ENCODE measurements at regions of chr12 and their contacts with region 1.

Region 1: GRCh38 chr12:125183187-125184067 is 118.2 kb downstream of the AACS start:
- DNase-seq: peak; percentile 31 to 86 (median 72)
- ATAC-seq: peak; percentile 85
- H3K4me3 ChIP-seq: no peak overlapping the region
- H3K4me3 Mint-ChIP-seq: peak overlapping the region in 6 of 10 donors; percentile 17 to 47 (median 34)
- H3K27ac ChIP-seq: no peak overlapping the region
- H3K27ac Mint-ChIP-seq: no peak overlapping the region
- H3K4me1 ChIP-seq: no peaks in the 10 kb centered on the region
- H3K4me1 Mint-ChIP-seq: peaks cover 5 to 11% (median 7%) of the 10 kb centered on the region in 7 donors
- H3K27me3 ChIP-seq: peaks cover 0 to 5% of the 10 kb centered on the region in 2 donors
- H3K27me3 Mint-ChIP-seq: peaks cover 47 to 65% (median 58%) of the 10 kb centered on the region in 5 donors

Region 2: DNA sequence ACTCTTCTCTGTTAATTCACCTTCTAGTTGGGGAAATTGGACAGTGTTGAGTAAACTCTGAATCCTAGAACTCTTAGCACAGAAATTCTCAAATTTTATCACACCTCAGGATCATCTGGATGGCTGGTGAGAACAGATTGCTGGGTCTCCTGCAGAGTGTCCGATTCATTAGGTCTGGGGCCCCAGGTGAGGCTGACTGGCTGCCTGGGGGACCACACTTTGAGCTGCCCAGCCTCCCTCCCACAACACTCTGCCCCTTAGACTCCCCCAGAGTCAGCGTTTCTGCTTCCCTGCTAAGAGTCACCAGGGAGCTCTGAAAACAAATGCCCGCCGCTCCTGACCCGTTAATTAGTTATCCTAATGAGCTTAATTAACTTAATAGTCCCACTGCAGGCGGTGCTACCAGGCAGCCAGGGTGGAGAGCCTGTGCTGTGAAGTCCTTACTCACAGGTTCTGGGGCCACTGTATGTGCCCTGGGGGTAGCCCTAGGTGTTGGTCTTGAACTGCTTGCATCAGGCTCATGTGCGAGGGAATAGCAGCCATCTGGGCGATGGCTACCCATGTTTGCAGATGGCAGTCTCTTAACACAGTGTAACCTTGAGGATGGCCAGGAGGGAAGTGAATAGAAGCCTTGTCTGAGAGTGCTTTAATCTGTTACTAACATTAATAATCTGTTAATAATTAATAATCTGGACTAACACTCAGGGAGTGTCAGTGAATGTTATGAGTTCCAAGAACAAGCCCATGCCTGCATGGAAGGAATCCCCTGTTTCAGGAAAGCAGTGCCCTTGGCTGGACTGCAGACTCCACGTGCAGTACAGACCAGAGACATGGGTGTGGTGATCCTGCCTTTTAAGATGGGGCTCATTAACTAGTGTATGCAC is 82.6 kb before region 1 on chr12:
- CTCF ChIA-PET with region 1: no interaction called
- POLR2A ChIA-PET with region 1: no interaction called
- intact Hi-C with region 1: no loop called
- DNase-seq: no peak
- ATAC-seq: no peak
- H3K4me3 ChIP-seq: no peak overlapping the region
- H3K4me3 Mint-ChIP-seq: no peak overlapping the region
- H3K27ac ChIP-seq: no peak overlapping the region
- H3K27ac Mint-ChIP-seq: no peak overlapping the region
- H3K4me1 ChIP-seq: no peaks in the 10 kb centered on the region
- H3K4me1 Mint-ChIP-seq: peaks cover 7 to 25% (median 14%) of the 10 kb centered on the region in 7 donors
- H3K27me3 ChIP-seq: no peaks in the 10 kb centered on the region
- H3K27me3 Mint-ChIP-seq: no peaks in the 10 kb centered on the region

Region 3: GRCh38 chr12:125203145-125203765 is 19.8 kb after region 1 on chr12:
- CTCF ChIA-PET with region 1: no interaction called
- POLR2A ChIA-PET with region 1: no interaction called
- intact Hi-C with region 1: loop called in 1 of 2 experiments (anchors 1 kb)
- DNase-seq: no peak
- ATAC-seq: no peak
- H3K4me3 ChIP-seq: no peak overlapping the region
- H3K4me3 Mint-ChIP-seq: no peak overlapping the region
- H3K27ac ChIP-seq: no peak overlapping the region
- H3K27ac Mint-ChIP-seq: no peak overlapping the region
- H3K4me1 ChIP-seq: no peaks in the 10 kb centered on the region
- H3K4me1 Mint-ChIP-seq: no peaks in the 10 kb centered on the region
- H3K27me3 ChIP-seq: no peaks in the 10 kb centered on the region
- H3K27me3 Mint-ChIP-seq: peaks cover 13 to 44% (median 36%) of the 10 kb centered on the region in 5 donors

Region 4: DNA sequence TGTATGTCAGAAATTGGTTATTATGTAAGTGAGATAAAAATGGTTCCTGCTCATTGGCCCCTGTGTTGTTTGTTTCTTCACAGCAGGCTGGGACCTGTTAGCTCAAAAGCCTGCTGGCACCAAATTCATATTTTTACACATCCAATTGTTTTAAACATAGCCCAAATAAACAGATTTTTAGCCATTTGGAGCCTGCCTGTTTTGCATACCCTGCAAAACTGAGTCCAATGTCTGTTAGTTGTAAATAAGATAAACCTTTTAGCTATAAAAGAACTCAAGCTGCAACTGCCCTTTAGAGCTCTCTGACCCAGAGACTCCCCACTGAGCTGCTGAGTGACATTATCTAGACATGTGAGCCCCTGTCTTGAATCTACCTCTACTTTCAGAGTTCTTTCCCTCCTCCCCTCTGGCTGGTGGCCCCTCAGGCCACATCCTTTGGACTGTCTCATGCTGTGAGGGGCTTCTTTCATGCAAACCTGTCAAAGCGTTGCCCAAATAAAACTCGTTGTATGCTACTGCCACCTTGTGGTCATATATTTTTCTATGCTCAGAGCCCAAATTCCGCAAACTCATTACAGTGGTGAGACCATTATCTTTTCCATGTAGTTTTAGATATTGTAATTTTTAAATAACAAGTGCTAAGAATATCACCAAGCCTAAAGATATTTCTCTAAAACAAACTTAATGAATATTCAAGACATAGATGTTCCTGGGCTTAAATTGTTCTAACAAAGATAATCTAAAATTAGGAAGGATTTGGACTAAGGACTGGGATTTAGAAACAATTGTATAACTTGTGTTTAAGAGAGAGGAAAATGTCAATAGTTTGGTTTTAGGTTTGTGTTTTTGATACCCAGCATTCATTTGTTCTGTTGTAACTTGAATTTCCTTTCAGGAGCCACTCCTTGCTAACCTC is 219.7 kb after region 1 on chr12:
- CTCF ChIA-PET with region 1: no interaction called
- POLR2A ChIA-PET with region 1: no interaction called
- intact Hi-C with region 1: loop called in 1 of 2 experiments (anchors 1 kb)
- DNase-seq: peak in 2 of 9 donors; percentile 2 to 10
- ATAC-seq: no peak
- H3K4me3 ChIP-seq: no peak overlapping the region
- H3K4me3 Mint-ChIP-seq: no peak overlapping the region
- H3K27ac ChIP-seq: no peak overlapping the region
- H3K27ac Mint-ChIP-seq: no peak overlapping the region
- H3K4me1 ChIP-seq: no peaks in the 10 kb centered on the region
- H3K4me1 Mint-ChIP-seq: peaks cover 0 to 7% (median 0%) of the 10 kb centered on the region in 7 donors
- H3K27me3 ChIP-seq: no peaks in the 10 kb centered on the region
- H3K27me3 Mint-ChIP-seq: peaks cover 3 to 42% (median 23%) of the 10 kb centered on the region in 5 donors

Region 5: GRCh38 chr12:125922328-125922727 is 738.9 kb after region 1 on chr12:
- CTCF ChIA-PET with region 1: no interaction called
- POLR2A ChIA-PET with region 1: no interaction called
- intact Hi-C with region 1: no loop called
- DNase-seq: no peak
- ATAC-seq: no peak
- H3K4me3 ChIP-seq: no peak overlapping the region
- H3K4me3 Mint-ChIP-seq: no peak overlapping the region
- H3K27ac ChIP-seq: no peak overlapping the region
- H3K27ac Mint-ChIP-seq: no peak overlapping the region
- H3K4me1 ChIP-seq: no peaks in the 10 kb centered on the region
- H3K4me1 Mint-ChIP-seq: no peaks in the 10 kb centered on the region
- H3K27me3 ChIP-seq: no peaks in the 10 kb centered on the region
- H3K27me3 Mint-ChIP-seq: peaks cover 0 to 5% (median 0%) of the 10 kb centered on the region in 5 donors

Region 6: DNA sequence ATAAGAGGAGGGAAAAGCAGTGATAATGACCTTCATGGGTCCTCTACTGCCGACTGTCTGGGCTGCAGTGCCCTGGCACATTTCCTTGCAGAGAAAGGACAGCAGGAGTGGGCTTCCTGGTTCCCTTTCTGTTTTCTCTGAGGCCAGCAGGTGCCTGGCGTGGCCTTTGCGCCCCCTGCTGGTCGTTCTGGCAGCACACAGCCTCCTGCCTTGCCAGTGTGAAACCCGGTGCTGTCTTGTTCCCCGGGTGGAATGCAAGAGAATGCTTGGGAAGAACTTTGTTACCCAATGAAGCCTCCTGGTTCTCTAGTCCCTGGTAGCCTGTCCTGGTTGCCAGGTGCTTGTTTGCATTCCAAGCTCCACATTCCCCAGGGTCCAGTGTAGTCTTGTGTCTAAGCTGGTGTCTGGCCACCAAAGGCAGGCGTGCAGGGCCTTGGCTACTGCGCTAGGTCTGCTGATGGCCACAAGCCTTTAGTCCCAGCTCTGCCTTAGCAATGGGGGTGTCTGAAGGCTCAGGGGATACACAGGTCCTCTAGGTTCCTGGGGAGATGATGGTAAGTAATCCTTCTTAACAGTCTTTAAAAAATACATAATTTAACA is 1691.1 kb after region 1 on chr12:
- CTCF ChIA-PET with region 1: interaction called, 4 read pairs
- POLR2A ChIA-PET with region 1: no interaction called
- intact Hi-C with region 1: loop called in 1 of 2 experiments (anchors 2 kb)
- DNase-seq: peak in 8 of 9 donors; percentile 15 to 58 (median 40)
- ATAC-seq: peak; percentile 53
- H3K4me3 ChIP-seq: no peak overlapping the region
- H3K4me3 Mint-ChIP-seq: no peak overlapping the region
- H3K27ac ChIP-seq: no peak overlapping the region
- H3K27ac Mint-ChIP-seq: no peak overlapping the region
- H3K4me1 ChIP-seq: no peaks in the 10 kb centered on the region
- H3K4me1 Mint-ChIP-seq: peaks cover 0 to 4% (median 0%) of the 10 kb centered on the region in 7 donors
- H3K27me3 ChIP-seq: no peaks in the 10 kb centered on the region
- H3K27me3 Mint-ChIP-seq: peaks cover 0 to 9% (median 4%) of the 10 kb centered on the region in 5 donors